Prostate gland (tissue), 2 donors: ENCODE measurements at regions of chr1 and their contacts with region 1.

Region 1: GRCh38 chr1:67748630-67749029 is 63.6 kb downstream of the GADD45A start:
- DNase-seq: no peak
- H3K4me3 ChIP-seq: no peak overlapping the region
- H3K27ac ChIP-seq: peak overlapping the region; percentile 67 to 78
- H3K4me1 ChIP-seq: no peaks in the 10 kb centered on the region
- H3K27me3 ChIP-seq: no peaks in the 10 kb centered on the region
- CTCF ChIP-seq: no peak
- POLR2A ChIP-seq: no peak

Region 2: DNA sequence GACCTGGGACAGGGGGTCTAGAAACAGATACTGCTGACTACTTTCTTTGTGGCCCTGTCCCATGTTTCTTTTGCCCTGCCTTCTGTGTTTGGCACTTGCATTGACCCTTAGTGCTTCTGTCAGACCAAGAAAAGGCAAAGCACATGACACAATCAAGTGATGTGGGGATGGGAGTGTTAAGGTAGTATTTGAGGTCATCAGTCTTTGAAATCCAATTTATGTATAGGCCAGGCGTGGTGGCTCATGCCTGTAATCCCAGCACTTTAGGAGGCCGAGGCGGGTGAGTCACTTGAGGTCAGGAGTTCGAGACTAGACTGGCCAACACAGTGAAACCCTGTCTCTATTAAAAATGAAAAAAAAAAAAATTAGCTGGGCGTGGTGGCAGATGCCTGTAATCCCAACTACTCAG is 344.4 kb before region 1 on chr1:
- intact Hi-C with region 1: no loop called
- DNase-seq: no peak
- H3K4me3 ChIP-seq: no peak overlapping the region
- H3K27ac ChIP-seq: no peak overlapping the region
- H3K4me1 ChIP-seq: no peaks in the 10 kb centered on the region
- H3K27me3 ChIP-seq: no peaks in the 10 kb centered on the region
- CTCF ChIP-seq: no peak
- POLR2A ChIP-seq: no peak

Region 3: DNA sequence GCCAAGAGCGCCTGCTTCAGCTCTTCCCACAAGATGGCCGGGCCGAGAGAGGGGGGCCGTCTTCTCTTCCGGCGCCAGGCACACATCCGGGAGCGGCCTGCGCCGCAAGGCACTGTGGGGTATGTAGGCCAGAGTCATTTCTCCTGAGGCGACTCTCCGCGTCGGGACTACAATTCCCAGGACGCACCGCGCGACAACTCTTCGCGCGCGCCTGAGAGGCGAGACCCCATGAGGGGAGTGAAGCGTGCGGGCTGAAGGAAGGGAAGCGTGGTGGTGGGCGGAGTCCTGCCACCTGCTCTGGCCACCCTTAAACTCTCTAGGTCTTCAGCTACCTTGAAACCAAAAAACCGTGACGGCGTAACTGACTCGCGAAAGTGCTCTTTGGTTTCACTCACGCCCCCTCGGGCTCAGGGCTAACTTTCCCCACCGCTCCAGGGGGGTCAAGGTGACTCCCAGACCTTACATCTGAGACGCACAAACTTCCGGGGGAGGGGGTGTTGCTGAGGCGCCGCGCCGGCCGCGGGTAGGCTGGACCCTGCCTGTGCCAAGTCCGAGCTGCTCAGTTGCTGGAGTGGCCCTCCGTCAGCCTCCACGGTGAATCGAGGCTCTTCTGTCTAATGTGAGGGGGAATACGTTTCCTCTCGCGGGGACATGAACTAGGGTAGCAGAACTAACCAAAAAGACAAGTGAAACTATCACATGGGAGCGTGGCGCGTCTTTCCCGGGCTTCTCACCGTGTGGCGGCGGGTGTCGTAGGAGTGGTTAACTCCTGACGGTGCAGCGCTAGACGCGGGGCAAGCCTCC is 318.1 kb before region 1 on chr1 and contains the start of gene SERBP1:
- intact Hi-C with region 1: loop called (anchors 10 kb)
- DNase-seq: peak; percentile 97
- H3K4me3 ChIP-seq: peak within 1 kb of the TSS; percentile 68 to 74
- H3K27ac ChIP-seq: peak within 1 kb of the TSS; percentile 91 to 92
- H3K4me1 ChIP-seq: no peaks in the 10 kb centered on the region
- H3K27me3 ChIP-seq: no peaks in the 10 kb centered on the region
- CTCF ChIP-seq: peak in 1 of 4 experiments; percentile 24
- POLR2A ChIP-seq: peak; percentile 87
- total RNA-seq, gene SERBP1: 155 to 169 TPM

Region 4: GRCh38 chr1:67618285-67619018 is 130.2 kb before region 1 on chr1:
- intact Hi-C with region 1: no loop called
- DNase-seq: peak; percentile 68
- H3K4me3 ChIP-seq: no peak overlapping the region
- H3K27ac ChIP-seq: peak overlapping the region; percentile 43 to 66
- H3K4me1 ChIP-seq: no peaks in the 10 kb centered on the region
- H3K27me3 ChIP-seq: no peaks in the 10 kb centered on the region
- CTCF ChIP-seq: no peak
- POLR2A ChIP-seq: no peak

Region 5: GRCh38 chr1:67708606-67709005 is 40.0 kb before region 1 on chr1:
- intact Hi-C with region 1: loop called (anchors 5 kb)
- DNase-seq: no peak
- H3K4me3 ChIP-seq: no peak overlapping the region
- H3K27ac ChIP-seq: no peak overlapping the region
- H3K4me1 ChIP-seq: peaks cover 6% of the 10 kb centered on the region
- H3K27me3 ChIP-seq: no peaks in the 10 kb centered on the region
- CTCF ChIP-seq: no peak
- POLR2A ChIP-seq: no peak

Region 6: DNA sequence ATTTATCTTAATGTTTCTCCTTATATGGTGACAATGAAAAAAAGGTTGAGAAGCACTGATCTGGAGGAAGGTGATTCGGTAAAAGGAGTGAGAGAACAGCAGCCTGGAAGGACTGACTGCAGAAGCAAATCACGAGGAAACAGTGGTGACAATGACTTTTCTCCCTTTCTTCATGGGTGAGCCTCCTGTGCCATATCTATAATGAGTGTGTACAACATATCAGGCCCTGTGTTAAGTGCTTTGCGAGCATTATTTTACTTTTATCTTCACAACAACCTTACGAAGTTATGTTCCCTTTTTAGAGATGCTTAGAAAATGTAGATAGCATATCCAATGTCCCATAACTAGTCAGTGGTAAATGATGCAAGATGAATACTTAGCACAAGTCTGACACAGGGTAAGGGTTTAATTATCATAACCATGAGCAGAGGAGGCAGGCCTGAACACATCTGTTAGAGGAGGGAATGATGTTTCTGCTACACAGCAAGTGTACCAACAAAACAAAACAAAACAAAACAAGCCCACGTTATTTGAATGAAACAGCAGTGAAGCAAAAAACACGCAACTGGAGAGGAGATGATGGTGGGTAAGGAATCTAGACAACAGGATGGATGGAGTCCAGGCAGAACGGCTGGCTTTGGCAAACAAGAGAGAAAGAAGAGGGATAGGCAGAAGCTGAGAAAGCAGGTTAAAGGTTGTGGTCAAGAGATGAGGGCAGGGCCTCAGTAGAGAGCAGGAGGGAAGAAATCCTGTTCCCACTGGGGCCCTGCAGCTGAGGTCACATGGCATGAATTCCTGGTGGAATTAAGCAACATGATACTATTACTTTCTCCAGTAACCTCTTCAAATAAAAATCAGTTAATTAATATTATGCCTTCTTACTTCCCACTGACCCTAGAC is 55.0 kb after region 1 on chr1:
- intact Hi-C with region 1: no loop called
- DNase-seq: no peak
- H3K4me3 ChIP-seq: no peak overlapping the region
- H3K27ac ChIP-seq: no peak overlapping the region
- H3K4me1 ChIP-seq: no peaks in the 10 kb centered on the region
- H3K27me3 ChIP-seq: no peaks in the 10 kb centered on the region
- CTCF ChIP-seq: no peak
- POLR2A ChIP-seq: no peak